ENCODE measurements at regions of chr6 and their contacts with region 1.

Region 1: DNA sequence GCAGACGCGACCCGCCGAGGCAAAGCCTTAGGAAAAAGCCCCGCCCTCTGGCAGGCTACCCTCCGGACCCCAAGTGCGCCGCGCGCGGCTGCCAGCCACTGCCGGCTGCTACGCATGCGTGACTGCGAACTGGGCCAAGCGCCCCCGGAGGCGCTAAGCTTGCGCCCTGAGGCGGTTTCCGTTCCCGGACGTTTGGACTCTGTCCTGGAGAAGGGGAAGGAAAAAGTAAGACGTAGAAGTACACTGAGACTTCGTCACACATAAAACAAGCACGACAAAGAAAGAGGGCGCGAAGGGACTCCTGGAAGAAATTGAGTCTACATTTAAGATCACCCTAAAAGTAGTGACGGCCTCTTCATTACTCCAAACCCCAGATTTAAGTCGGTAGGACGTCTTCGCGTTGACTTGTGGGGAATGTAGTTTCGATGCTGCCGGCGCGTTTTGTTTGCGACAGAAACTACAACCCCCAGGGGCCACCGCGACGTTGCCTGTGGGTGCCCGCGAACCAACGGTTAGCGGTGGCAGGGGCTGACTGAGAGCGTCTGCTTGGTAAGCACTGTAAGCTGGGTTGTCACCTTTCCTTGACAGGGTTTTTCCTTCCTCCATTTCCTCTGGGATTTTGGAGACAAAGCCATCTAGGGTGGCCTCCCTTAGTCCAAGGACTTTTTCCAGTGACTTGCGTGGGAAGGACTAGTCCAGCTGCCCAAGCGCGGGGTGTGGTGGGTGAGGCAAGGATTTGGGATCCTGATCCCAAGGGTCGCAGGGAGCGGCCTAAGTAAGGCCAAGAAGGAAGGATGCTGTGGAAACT is at the start of gene CEP57L1:
- DNase-seq: peak; percentile 88 to 96 (median 94)
- ATAC-seq: peak; percentile 81
- H3K4me3 ChIP-seq: peak within 1 kb of the TSS; percentile 96
- H3K4me3 Mint-ChIP-seq: peak within 1 kb of the TSS; percentile 92 to 98 (median 96)
- H3K27ac ChIP-seq: peak within 1 kb of the TSS; percentile 94
- H3K27ac Mint-ChIP-seq: peak within 1 kb of the TSS; percentile 98 to 99 (median 99)
- H3K4me1 ChIP-seq: peaks cover 21 to 29% of the 10 kb centered on the region in 2 donors
- H3K4me1 Mint-ChIP-seq: peaks cover 26 to 64% (median 54%) of the 10 kb centered on the region in 7 donors
- H3K27me3 ChIP-seq: no peaks in the 10 kb centered on the region
- H3K27me3 Mint-ChIP-seq: no peaks in the 10 kb centered on the region
- total RNA-seq, gene CEP57L1: 3.1 to 17.2 (median 6.5) TPM

Region 2: GRCh38 chr6:107716688-107717089 is 1378.5 kb before region 1 on chr6:
- CTCF ChIA-PET with region 1: no interaction called
- POLR2A ChIA-PET with region 1: no interaction called
- intact Hi-C with region 1: loop called in 1 of 2 experiments (anchors 2 kb)
- DNase-seq: peak; percentile 27 to 89 (median 85)
- ATAC-seq: peak; percentile 95
- H3K4me3 ChIP-seq: no peak overlapping the region
- H3K4me3 Mint-ChIP-seq: peak overlapping the region; percentile 43 to 81 (median 72)
- H3K27ac ChIP-seq: peak overlapping the region; percentile 49
- H3K27ac Mint-ChIP-seq: peak overlapping the region; percentile 82 to 97 (median 92)
- H3K4me1 ChIP-seq: peaks cover 47 to 57% of the 10 kb centered on the region in 2 donors
- H3K4me1 Mint-ChIP-seq: peaks cover 46 to 86% (median 74%) of the 10 kb centered on the region in 7 donors
- H3K27me3 ChIP-seq: no peaks in the 10 kb centered on the region
- H3K27me3 Mint-ChIP-seq: no peaks in the 10 kb centered on the region

Region 3: GRCh38 chr6:108260809-108261569 is 834.2 kb before region 1 on chr6 and contains the start of gene SNX3:
- CTCF ChIA-PET with region 1: no interaction called
- POLR2A ChIA-PET with region 1: interaction called, 3 read pairs
- intact Hi-C with region 1: loop called (anchors 1 kb)
- DNase-seq: peak; percentile 81 to 92 (median 91)
- ATAC-seq: peak; percentile 92
- H3K4me3 ChIP-seq: peak within 1 kb of the TSS; percentile 76
- H3K4me3 Mint-ChIP-seq: peak within 1 kb of the TSS; percentile 78 to 97 (median 91)
- H3K27ac ChIP-seq: peak within 1 kb of the TSS; percentile 96
- H3K27ac Mint-ChIP-seq: peak within 1 kb of the TSS; percentile 85 to 98 (median 96)
- H3K4me1 ChIP-seq: peaks cover 0 to 8% of the 10 kb centered on the region in 2 donors
- H3K4me1 Mint-ChIP-seq: peaks cover 16 to 40% (median 26%) of the 10 kb centered on the region in 7 donors
- H3K27me3 ChIP-seq: no peaks in the 10 kb centered on the region
- H3K27me3 Mint-ChIP-seq: peaks cover 0 to 14% (median 0%) of the 10 kb centered on the region in 5 donors
- total RNA-seq, gene SNX3: 42.5 to 87.4 (median 65.8) TPM

Region 4: GRCh38 chr6:108848116-108848868 is 246.9 kb before region 1 on chr6 and contains the start of gene ARMC2:
- CTCF ChIA-PET with region 1: no interaction called
- POLR2A ChIA-PET with region 1: interaction called, 6 read pairs
- intact Hi-C with region 1: loop called (anchors 1 kb)
- DNase-seq: peak; percentile 72 to 95 (median 79)
- ATAC-seq: peak; percentile 94
- H3K4me3 ChIP-seq: peak within 1 kb of the TSS; percentile 90
- H3K4me3 Mint-ChIP-seq: peak within 1 kb of the TSS; percentile 75 to 93 (median 88)
- H3K27ac ChIP-seq: peak within 1 kb of the TSS; percentile 69
- H3K27ac Mint-ChIP-seq: peak within 1 kb of the TSS; percentile 72 to 93 (median 85)
- H3K4me1 ChIP-seq: peaks cover 6 to 13% of the 10 kb centered on the region in 2 donors
- H3K4me1 Mint-ChIP-seq: peaks cover 11 to 39% (median 29%) of the 10 kb centered on the region in 7 donors
- H3K27me3 ChIP-seq: no peaks in the 10 kb centered on the region
- H3K27me3 Mint-ChIP-seq: peaks cover 0 to 36% (median 0%) of the 10 kb centered on the region in 5 donors
- total RNA-seq, gene ARMC2: 6.2 to 12.7 (median 7.9) TPM

Region 5: DNA sequence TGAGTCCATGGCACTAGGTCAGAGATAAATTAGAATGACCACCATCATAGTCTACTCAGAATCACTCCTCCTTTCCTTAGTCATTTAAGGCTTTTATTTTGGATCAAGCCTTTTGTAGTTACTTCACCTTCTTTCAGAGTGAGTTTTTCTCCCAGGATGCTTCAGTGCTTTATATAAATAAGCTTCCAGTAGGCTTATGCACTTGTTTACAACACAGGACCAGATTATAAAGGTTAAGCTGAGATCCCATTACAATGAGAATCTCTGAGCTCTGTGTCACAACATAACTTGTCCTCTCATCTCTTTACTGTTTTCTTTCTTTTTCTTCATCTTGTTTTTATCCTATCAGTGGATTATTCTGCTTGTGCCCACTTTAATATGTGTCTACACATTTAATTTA is 48.0 kb after region 1 on chr6:
- CTCF ChIA-PET with region 1: no interaction called
- POLR2A ChIA-PET with region 1: no interaction called
- intact Hi-C with region 1: no loop called
- DNase-seq: no peak
- ATAC-seq: no peak
- H3K4me3 ChIP-seq: no peak overlapping the region
- H3K4me3 Mint-ChIP-seq: no peak overlapping the region
- H3K27ac ChIP-seq: no peak overlapping the region
- H3K27ac Mint-ChIP-seq: no peak overlapping the region
- H3K4me1 ChIP-seq: no peaks in the 10 kb centered on the region
- H3K4me1 Mint-ChIP-seq: no peaks in the 10 kb centered on the region
- H3K27me3 ChIP-seq: no peaks in the 10 kb centered on the region
- H3K27me3 Mint-ChIP-seq: no peaks in the 10 kb centered on the region

Region 6: GRCh38 chr6:109153752-109154151 is 58.5 kb after region 1 on chr6:
- CTCF ChIA-PET with region 1: no interaction called
- POLR2A ChIA-PET with region 1: no interaction called
- intact Hi-C with region 1: no loop called
- DNase-seq: no peak
- ATAC-seq: no peak
- H3K4me3 ChIP-seq: no peak overlapping the region
- H3K4me3 Mint-ChIP-seq: no peak overlapping the region
- H3K27ac ChIP-seq: no peak overlapping the region
- H3K27ac Mint-ChIP-seq: no peak overlapping the region
- H3K4me1 ChIP-seq: no peaks in the 10 kb centered on the region
- H3K4me1 Mint-ChIP-seq: no peaks in the 10 kb centered on the region
- H3K27me3 ChIP-seq: no peaks in the 10 kb centered on the region
- H3K27me3 Mint-ChIP-seq: no peaks in the 10 kb centered on the region

Region 7: DNA sequence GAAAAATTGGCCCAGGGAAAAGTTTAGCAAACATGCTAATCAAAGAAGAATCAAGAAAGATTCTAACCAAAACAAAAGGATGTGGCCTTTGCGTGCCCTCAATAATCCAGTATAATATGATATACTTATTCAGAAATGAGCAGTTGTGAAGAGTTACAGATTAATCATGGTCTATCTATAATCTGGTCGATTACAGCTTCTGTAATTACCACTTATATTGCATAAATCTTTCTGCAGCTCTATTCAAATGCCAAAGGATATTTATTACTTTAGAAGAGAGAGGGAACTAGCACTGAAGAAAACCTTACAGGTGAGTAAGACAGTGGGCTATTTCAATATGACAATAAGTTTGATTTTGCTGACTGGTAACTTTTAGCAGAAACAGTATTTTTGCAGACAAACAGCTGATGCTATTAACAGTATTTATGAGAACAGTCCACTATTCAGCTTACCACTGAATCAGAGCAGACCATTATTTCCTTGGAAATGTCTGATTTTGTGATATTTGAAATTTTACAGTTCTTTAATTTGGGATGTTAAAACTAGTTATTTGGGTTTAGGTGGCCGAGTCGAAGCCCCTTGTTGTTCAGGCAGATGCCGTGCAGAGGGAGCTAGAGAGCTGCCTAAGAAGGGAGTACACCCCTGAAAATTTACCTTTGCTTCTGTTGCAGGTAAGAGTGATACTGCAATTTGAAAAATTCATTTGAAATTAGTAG is 92.3 kb after region 1 on chr6:
- CTCF ChIA-PET with region 1: no interaction called
- POLR2A ChIA-PET with region 1: interaction called, 3 read pairs
- intact Hi-C with region 1: loop called in 1 of 2 experiments (anchors 5 kb)
- DNase-seq: peak; percentile 19 to 68 (median 56)
- ATAC-seq: peak; percentile 91
- H3K4me3 ChIP-seq: no peak overlapping the region
- H3K4me3 Mint-ChIP-seq: no peak overlapping the region
- H3K27ac ChIP-seq: no peak overlapping the region
- H3K27ac Mint-ChIP-seq: no peak overlapping the region
- H3K4me1 ChIP-seq: no peaks in the 10 kb centered on the region
- H3K4me1 Mint-ChIP-seq: peaks cover 0 to 4% (median 0%) of the 10 kb centered on the region in 7 donors
- H3K27me3 ChIP-seq: peaks cover 0 to 3% of the 10 kb centered on the region in 2 donors
- H3K27me3 Mint-ChIP-seq: peaks cover 1 to 45% (median 8%) of the 10 kb centered on the region in 5 donors

Region 8: DNA sequence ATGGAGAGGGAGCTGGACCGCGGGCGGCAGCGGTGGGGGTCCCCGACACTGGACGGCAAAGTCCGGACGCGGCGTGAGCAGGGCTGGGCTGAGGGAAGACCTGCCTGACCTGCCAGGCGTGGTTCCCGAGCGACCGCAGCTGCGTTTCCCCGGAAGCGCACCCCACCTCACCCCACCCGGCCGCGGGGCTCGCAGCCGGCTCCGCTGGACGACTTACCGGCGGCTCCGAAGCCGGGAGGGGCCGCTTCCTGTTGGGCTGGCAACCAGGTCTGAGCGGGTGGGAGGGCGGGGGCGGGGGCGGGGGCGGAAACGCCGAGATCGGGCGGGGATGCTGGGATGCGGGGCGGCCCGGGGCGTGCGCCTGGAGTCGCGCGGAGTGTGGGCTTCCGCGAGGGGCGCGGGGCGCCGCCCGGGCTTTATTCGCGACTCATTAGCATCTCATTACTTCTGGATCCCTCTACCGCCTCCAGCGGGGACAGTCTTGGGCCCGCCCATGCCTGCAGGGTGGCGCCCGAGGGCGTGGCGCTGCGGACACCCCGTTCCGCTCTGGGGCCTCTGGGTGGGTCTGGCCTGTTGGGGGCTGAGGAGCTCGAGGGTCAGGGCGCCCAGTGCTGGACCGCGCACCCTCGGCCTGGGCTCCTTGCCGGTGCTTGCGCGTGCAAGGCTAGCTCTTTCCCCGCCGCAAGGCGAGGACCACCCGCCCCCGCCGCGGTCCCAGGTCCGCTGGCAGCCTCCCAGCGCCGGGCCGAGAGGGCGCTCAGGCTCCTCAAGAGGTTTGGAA is 360.5 kb after region 1 on chr6 and contains the start of gene MICAL1:
- CTCF ChIA-PET with region 1: no interaction called
- POLR2A ChIA-PET with region 1: no interaction called
- intact Hi-C with region 1: loop called (anchors 1 to 2 kb)
- DNase-seq: peak; percentile 55 to 79 (median 72)
- ATAC-seq: peak; percentile 82
- H3K4me3 ChIP-seq: peak within 1 kb of the TSS; percentile 81
- H3K4me3 Mint-ChIP-seq: peak within 1 kb of the TSS; percentile 95 to 99 (median 97)
- H3K27ac ChIP-seq: peak within 1 kb of the TSS; percentile 94
- H3K27ac Mint-ChIP-seq: peak within 1 kb of the TSS; percentile 83 to 99 (median 97)
- H3K4me1 ChIP-seq: peaks cover 40 to 45% of the 10 kb centered on the region in 2 donors
- H3K4me1 Mint-ChIP-seq: peaks cover 29 to 68% (median 62%) of the 10 kb centered on the region in 7 donors
- H3K27me3 ChIP-seq: no peaks in the 10 kb centered on the region
- H3K27me3 Mint-ChIP-seq: no peaks in the 10 kb centered on the region
- total RNA-seq, gene MICAL1: 61.4 to 125 (median 78.7) TPM

Region 9: DNA sequence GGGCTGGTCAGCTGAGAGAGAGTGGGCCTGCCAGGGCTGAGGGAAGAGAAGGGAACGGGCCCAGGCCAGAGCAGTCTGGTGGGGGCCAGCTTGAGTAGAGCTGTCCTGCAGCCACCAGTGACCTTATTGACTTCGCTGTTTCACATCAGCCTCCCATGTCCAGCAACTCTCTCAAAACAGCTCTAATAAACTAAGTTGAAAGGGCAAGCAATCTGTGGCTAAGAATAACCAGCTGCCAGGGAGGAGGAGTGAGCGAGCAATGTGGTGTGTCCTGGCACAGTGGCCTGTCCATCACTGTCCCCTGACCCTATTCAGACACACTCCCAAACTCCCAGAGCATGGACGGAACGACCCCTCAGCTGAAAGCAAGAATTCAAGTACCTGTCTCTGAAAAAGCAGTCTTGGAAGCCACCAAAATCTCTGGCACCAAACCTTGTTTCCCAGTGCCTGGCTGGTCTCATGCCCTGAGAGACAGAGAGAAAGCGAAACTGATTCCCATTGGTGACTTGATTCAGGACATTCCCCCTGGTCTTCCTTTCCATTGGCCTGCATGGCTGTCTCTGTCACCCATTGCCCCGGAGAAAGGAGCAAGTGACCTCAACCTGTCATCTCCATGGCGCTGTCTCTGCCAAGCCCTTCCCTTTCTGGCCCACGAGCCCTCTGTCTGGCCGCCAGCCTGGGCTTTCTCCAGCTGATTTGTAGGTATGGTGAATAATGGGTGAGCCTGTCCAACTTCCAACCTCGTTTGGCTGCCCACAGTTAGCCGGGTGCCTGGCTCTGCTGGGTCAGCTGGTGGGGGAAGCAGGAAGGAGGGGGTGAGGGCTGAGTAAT is 1320.1 kb after region 1 on chr6 and contains the start of gene DDO:
- CTCF ChIA-PET with region 1: no interaction called
- POLR2A ChIA-PET with region 1: no interaction called
- intact Hi-C with region 1: no loop called
- DNase-seq: no peak
- ATAC-seq: peak; percentile 86
- H3K4me3 ChIP-seq: no peak within 1 kb of the TSS
- H3K4me3 Mint-ChIP-seq: peak within 1 kb of the TSS in 4 of 10 donors; percentile 35 to 62 (median 58)
- H3K27ac ChIP-seq: no peak within 1 kb of the TSS
- H3K27ac Mint-ChIP-seq: peak within 1 kb of the TSS in 1 of 9 donors; percentile 16
- H3K4me1 ChIP-seq: no peaks in the 10 kb centered on the region
- H3K4me1 Mint-ChIP-seq: peaks cover 0 to 10% (median 0%) of the 10 kb centered on the region in 7 donors
- H3K27me3 ChIP-seq: peaks cover 0 to 3% of the 10 kb centered on the region in 2 donors
- H3K27me3 Mint-ChIP-seq: peaks cover 0 to 19% (median 7%) of the 10 kb centered on the region in 5 donors
- total RNA-seq, gene DDO: 0.47 TPM in 1 of 5 experiments, not detected in the others

Region 10: DNA sequence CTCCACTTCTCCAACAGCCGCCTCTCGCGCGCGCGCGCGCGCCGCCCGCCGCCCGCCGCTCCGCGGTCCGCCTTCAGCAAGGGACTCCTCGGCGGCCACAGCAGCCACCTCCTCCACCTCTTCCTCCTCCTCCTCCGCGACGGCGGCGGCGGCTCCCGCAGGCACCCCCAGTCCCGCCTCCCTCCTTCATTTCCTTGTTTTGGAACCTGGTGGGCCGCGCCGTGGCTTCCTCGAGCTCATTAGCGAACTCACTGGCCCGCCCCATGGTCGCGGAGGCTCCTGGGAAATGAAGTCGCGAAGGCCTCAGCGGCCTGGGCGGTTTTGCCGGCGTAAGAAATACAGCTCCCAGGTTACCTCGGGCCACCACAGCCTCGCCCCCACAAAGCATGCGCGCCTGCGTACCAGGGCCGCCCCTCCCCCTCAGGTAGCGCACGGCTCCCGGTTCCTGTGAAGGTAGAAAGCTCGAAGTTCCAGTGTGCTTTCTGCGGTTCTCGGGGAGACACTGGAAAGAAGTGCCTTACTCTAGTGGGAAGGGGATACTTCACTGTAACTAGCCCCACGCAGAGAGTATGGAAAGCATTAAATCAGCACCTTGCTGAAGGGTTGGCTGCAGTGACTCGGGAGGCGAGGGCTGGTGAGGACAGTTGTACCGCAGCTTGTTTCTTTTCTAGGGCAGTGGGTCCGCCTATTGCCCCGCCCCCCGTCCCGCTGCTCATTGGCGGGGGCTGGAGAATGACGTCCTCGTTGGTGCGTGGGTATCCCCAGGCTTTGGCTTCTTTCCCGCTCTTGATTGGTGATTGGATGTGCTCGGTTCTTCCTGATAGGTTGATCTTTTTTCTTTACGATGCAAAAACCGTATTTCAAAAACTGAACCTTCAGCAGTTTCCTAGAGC is 1720.2 kb after region 1 on chr6 and contains the start of gene CDK19:
- CTCF ChIA-PET with region 1: no interaction called
- POLR2A ChIA-PET with region 1: no interaction called
- intact Hi-C with region 1: loop called in 1 of 2 experiments (anchors 1 kb)
- DNase-seq: peak; percentile 94 to 99 (median 99)
- ATAC-seq: peak; percentile 87
- H3K4me3 ChIP-seq: peak within 1 kb of the TSS; percentile 97
- H3K4me3 Mint-ChIP-seq: peak within 1 kb of the TSS; percentile 94 to 100 (median 98)
- H3K27ac ChIP-seq: peak within 1 kb of the TSS; percentile 89
- H3K27ac Mint-ChIP-seq: peak within 1 kb of the TSS; percentile 89 to 100 (median 99)
- H3K4me1 ChIP-seq: peaks cover 11 to 15% of the 10 kb centered on the region in 2 donors
- H3K4me1 Mint-ChIP-seq: peaks cover 14 to 46% (median 26%) of the 10 kb centered on the region in 7 donors
- H3K27me3 ChIP-seq: no peaks in the 10 kb centered on the region
- H3K27me3 Mint-ChIP-seq: no peaks in the 10 kb centered on the region
- total RNA-seq, gene CDK19: 11.3 to 24.4 (median 21.0) TPM

Measured in naive thymus-derived CD4-positive, alpha-beta T cell (primary cell).